Ovary (tissue), 10 donors: ENCODE measurements at regions of chr2 and their contacts with region 1.

Region 1: GRCh38 chr2:1591978-1592907 is 152.1 kb downstream of the PXDN start:
- DNase-seq: peak; percentile 87 to 91 (median 90)
- H3K4me3 ChIP-seq: peak overlapping the region; percentile 1
- H3K27ac ChIP-seq: peak overlapping the region in 1 of 2 donors; percentile 20
- H3K4me1 ChIP-seq: peaks cover 9% of the 10 kb centered on the region
- H3K27me3 ChIP-seq: no peaks in the 10 kb centered on the region
- CTCF ChIP-seq: peak; percentile 69 to 94 (median 92)
- EP300 ChIP-seq: no peak
- POLR2A ChIP-seq: peak; percentile 25

Region 2: GRCh38 chr2:1366546-1367134 is 225.6 kb before region 1 on chr2:
- intact Hi-C with region 1: no loop called
- DNase-seq: peak; percentile 20 to 84 (median 37)
- H3K4me3 ChIP-seq: no peak overlapping the region
- H3K27ac ChIP-seq: no peak overlapping the region
- H3K4me1 ChIP-seq: peaks cover 5% of the 10 kb centered on the region
- H3K27me3 ChIP-seq: no peaks in the 10 kb centered on the region
- CTCF ChIP-seq: no peak
- EP300 ChIP-seq: no peak
- POLR2A ChIP-seq: no peak

Region 3: GRCh38 chr2:1653956-1654695 is 61.9 kb after region 1 on chr2:
- intact Hi-C with region 1: loop called in 1 of 4 experiments (anchors 5 kb)
- DNase-seq: peak in 2 of 5 donors; percentile 8 to 13
- H3K4me3 ChIP-seq: no peak overlapping the region
- H3K27ac ChIP-seq: peak overlapping the region in 1 of 2 donors; percentile 70
- H3K4me1 ChIP-seq: peaks cover 32% of the 10 kb centered on the region
- H3K27me3 ChIP-seq: no peaks in the 10 kb centered on the region
- CTCF ChIP-seq: no peak
- EP300 ChIP-seq: no peak
- POLR2A ChIP-seq: no peak